ENCODE measurements at regions of chr7 and their contacts with region 1.

Region 1: GRCh38 chr7:100673300-100673941 is at the start of gene GNB2:
- DNase-seq: peak; percentile 93 to 97
- ATAC-seq: peak; percentile 56 to 81 (median 59)
- H3K4me3 ChIP-seq: peak within 1 kb of the TSS; percentile 99
- H3K4me3 Mint-ChIP-seq: peak within 1 kb of the TSS; percentile 95
- H3K27ac ChIP-seq: peak within 1 kb of the TSS; percentile 99
- H3K27ac Mint-ChIP-seq: peak within 1 kb of the TSS; percentile 90 to 97
- H3K4me1 ChIP-seq: peaks cover 19% of the 10 kb centered on the region
- H3K4me1 Mint-ChIP-seq: peaks cover 0 to 29% of the 10 kb centered on the region in 2 donors
- H3K27me3 ChIP-seq: no peaks in the 10 kb centered on the region
- H3K27me3 Mint-ChIP-seq: no peaks in the 10 kb centered on the region
- CTCF ChIP-seq: no peak
- total RNA-seq, gene GNB2: 194 to 227 (median 212) TPM

Region 2: GRCh38 chr7:100101016-100101862 is 572.2 kb before region 1 on chr7 and contains the starts of genes AP4M1 and MCM7:
- intact Hi-C with region 1: loop called (anchors 10 kb)
- DNase-seq: peak; percentile 97
- ATAC-seq: peak; percentile 79 to 93 (median 81)
- H3K4me3 ChIP-seq: peak within 1 kb of the TSS; percentile 98
- H3K4me3 Mint-ChIP-seq: peak within 1 kb of the TSS; percentile 95
- H3K27ac ChIP-seq: peak within 1 kb of the TSS; percentile 93
- H3K27ac Mint-ChIP-seq: peak within 1 kb of the TSS; percentile 96 to 98
- H3K4me1 ChIP-seq: peaks cover 28% of the 10 kb centered on the region
- H3K4me1 Mint-ChIP-seq: peaks cover 36 to 43% of the 10 kb centered on the region in 2 donors
- H3K27me3 ChIP-seq: no peaks in the 10 kb centered on the region
- H3K27me3 Mint-ChIP-seq: no peaks in the 10 kb centered on the region
- CTCF ChIP-seq: no peak
- total RNA-seq, gene AP4M1: 8.4 to 12.8 (median 12.7) TPM
- total RNA-seq, gene MCM7: 112 to 214 (median 137) TPM

Region 3: GRCh38 chr7:100547872-100548271 is 125.5 kb before region 1 on chr7:
- intact Hi-C with region 1: no loop called
- DNase-seq: no peak
- ATAC-seq: no peak
- H3K4me3 ChIP-seq: no peak overlapping the region
- H3K4me3 Mint-ChIP-seq: peak overlapping the region; percentile 88
- H3K27ac ChIP-seq: peak overlapping the region; percentile 76
- H3K27ac Mint-ChIP-seq: peak overlapping the region; percentile 94 to 95
- H3K4me1 ChIP-seq: peaks cover 68% of the 10 kb centered on the region
- H3K4me1 Mint-ChIP-seq: peaks cover 70 to 73% of the 10 kb centered on the region in 2 donors
- H3K27me3 ChIP-seq: no peaks in the 10 kb centered on the region
- H3K27me3 Mint-ChIP-seq: no peaks in the 10 kb centered on the region
- CTCF ChIP-seq: no peak

Region 4: GRCh38 chr7:100586266-100587025 is 87.0 kb before region 1 on chr7 and contains the start of gene FBXO24:
- intact Hi-C with region 1: loop called (anchors 2 kb)
- DNase-seq: peak; percentile 99 to 100
- ATAC-seq: peak; percentile 78 to 94 (median 84)
- H3K4me3 ChIP-seq: peak within 1 kb of the TSS; percentile 97
- H3K4me3 Mint-ChIP-seq: peak within 1 kb of the TSS; percentile 97
- H3K27ac ChIP-seq: peak within 1 kb of the TSS; percentile 92
- H3K27ac Mint-ChIP-seq: peak within 1 kb of the TSS; percentile 89 to 92
- H3K4me1 ChIP-seq: peaks cover 45% of the 10 kb centered on the region
- H3K4me1 Mint-ChIP-seq: peaks cover 19 to 34% of the 10 kb centered on the region in 2 donors
- H3K27me3 ChIP-seq: peaks cover 3% of the 10 kb centered on the region
- H3K27me3 Mint-ChIP-seq: peaks cover 7 to 14% of the 10 kb centered on the region in 2 donors
- CTCF ChIP-seq: no peak
- total RNA-seq, gene FBXO24: 0.45 to 0.94 (median 0.88) TPM

Region 5: GRCh38 chr7:100611974-100612729 is 61.3 kb before region 1 on chr7 and contains the start of gene MOSPD3:
- intact Hi-C with region 1: loop called (anchors 1 kb)
- DNase-seq: peak; percentile 98 to 99
- ATAC-seq: peak; percentile 91 to 97 (median 91)
- H3K4me3 ChIP-seq: peak within 1 kb of the TSS; percentile 91
- H3K4me3 Mint-ChIP-seq: peak within 1 kb of the TSS; percentile 99
- H3K27ac ChIP-seq: peak within 1 kb of the TSS; percentile 91
- H3K27ac Mint-ChIP-seq: peak within 1 kb of the TSS; percentile 99
- H3K4me1 ChIP-seq: peaks cover 23% of the 10 kb centered on the region
- H3K4me1 Mint-ChIP-seq: peaks cover 16 to 27% of the 10 kb centered on the region in 2 donors
- H3K27me3 ChIP-seq: no peaks in the 10 kb centered on the region
- H3K27me3 Mint-ChIP-seq: no peaks in the 10 kb centered on the region
- CTCF ChIP-seq: no peak
- total RNA-seq, gene MOSPD3: 14.5 to 15.9 (median 15.5) TPM

Region 6: GRCh38 chr7:100632951-100633717 is 40.3 kb before region 1 on chr7:
- intact Hi-C with region 1: loop called (anchors 5 kb)
- DNase-seq: peak; percentile 37 to 78
- ATAC-seq: peak; percentile 77 to 81 (median 79)
- H3K4me3 ChIP-seq: peak overlapping the region; percentile 88
- H3K4me3 Mint-ChIP-seq: peak overlapping the region; percentile 86
- H3K27ac ChIP-seq: peak overlapping the region; percentile 56
- H3K27ac Mint-ChIP-seq: peak overlapping the region in 1 of 2 donors; percentile 34
- H3K4me1 ChIP-seq: peaks cover 14% of the 10 kb centered on the region
- H3K4me1 Mint-ChIP-seq: peaks cover 11 to 32% of the 10 kb centered on the region in 2 donors
- H3K27me3 ChIP-seq: no peaks in the 10 kb centered on the region
- H3K27me3 Mint-ChIP-seq: peaks cover 0 to 4% of the 10 kb centered on the region in 2 donors
- CTCF ChIP-seq: peak; percentile 31